ENCODE measurements at regions of chr11 and their contacts with region 1.

Region 1: DNA sequence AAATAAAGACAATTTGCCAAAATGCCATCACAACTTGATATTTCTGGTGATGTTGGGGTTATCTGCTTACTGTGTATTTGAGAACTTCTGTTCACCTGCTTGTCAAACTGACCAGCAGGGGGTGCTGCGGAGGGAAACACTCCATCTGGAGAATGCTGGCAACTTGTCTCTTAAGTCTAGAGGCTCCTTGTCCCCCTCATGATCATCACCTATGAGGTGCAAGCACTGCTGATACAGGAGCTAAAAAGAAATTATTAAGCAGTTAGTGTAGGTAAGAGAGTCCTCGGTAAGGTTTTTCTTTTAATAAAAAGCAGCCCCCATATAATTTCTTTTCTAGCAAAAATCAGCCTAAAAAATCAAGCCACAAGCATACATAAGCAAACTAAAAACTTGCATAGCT is 32.7 kb upstream of the GLYATL1B start:
- DNase-seq: no peak
- ATAC-seq: peak; percentile 84
- H3K4me3 ChIP-seq: no peak overlapping the region
- H3K27ac ChIP-seq: no peak overlapping the region
- H3K4me1 ChIP-seq: peaks cover 4% of the 10 kb centered on the region; the same call in 1 of the 2 replicates
- H3K27me3 ChIP-seq: no peaks in the 10 kb centered on the region
- CTCF ChIP-seq: peak; percentile 47 to 75 (median 63)
- EP300 ChIP-seq: no peak
- POLR2A ChIP-seq: no peak
- RAD21 ChIP-seq: peak; percentile 44; the same call in 1 of the 2 replicates

Region 2: DNA sequence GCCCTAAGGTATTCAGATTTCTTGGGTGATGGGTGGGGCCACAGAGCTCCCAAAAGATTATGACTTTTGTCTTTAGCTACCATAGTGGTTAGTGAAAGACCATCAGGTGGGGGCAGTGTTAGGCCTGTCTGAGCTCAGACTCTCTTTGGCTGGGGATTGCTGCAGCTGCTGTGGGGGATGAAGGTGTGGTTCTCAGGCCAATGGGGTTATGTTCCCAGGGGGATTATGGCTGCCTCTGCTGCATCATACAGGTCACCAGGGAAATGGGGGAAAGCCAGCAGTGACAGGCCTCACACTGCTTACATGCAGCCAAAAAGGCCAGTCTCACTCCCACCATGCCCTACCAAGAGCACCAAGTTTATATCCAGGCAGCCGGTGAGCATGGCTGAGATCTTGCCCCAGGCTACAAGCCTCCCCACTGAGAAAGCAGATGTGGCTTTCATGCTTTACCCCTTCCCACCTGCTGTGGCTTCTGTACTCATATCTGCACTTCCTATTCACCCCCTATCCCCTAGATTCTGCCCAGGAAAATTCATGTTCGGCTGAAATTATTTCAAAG is 406.2 kb before region 1 on chr11:
- CTCF ChIA-PET with region 1: interaction called, 14 read pairs
- POLR2A ChIA-PET with region 1: no interaction called
- RAD21 ChIA-PET with region 1: interaction called, 13 read pairs
- SMC1A ChIA-PET with region 1: interaction called, 3 read pairs
- in situ Hi-C with region 1: no loop called
- intact Hi-C with region 1: loop called (anchors 5 kb)
- DNase-seq: peak; percentile 48
- ATAC-seq: peak; percentile 93
- H3K4me3 ChIP-seq: no peak overlapping the region
- H3K27ac ChIP-seq: peak overlapping the region; percentile 40; the same call in 1 of the 2 replicates
- H3K4me1 ChIP-seq: peaks cover 10% of the 10 kb centered on the region
- H3K27me3 ChIP-seq: no peaks in the 10 kb centered on the region
- CTCF ChIP-seq: peak in 2 of 3 experiments; percentile 21 to 40; a peak in 3 of 6 replicates
- EP300 ChIP-seq: peak; percentile 66 to 72; a peak in 2 of 4 replicates
- POLR2A ChIP-seq: no peak
- RAD21 ChIP-seq: peak; percentile 57; the same call in 1 of the 2 replicates

Region 3: DNA sequence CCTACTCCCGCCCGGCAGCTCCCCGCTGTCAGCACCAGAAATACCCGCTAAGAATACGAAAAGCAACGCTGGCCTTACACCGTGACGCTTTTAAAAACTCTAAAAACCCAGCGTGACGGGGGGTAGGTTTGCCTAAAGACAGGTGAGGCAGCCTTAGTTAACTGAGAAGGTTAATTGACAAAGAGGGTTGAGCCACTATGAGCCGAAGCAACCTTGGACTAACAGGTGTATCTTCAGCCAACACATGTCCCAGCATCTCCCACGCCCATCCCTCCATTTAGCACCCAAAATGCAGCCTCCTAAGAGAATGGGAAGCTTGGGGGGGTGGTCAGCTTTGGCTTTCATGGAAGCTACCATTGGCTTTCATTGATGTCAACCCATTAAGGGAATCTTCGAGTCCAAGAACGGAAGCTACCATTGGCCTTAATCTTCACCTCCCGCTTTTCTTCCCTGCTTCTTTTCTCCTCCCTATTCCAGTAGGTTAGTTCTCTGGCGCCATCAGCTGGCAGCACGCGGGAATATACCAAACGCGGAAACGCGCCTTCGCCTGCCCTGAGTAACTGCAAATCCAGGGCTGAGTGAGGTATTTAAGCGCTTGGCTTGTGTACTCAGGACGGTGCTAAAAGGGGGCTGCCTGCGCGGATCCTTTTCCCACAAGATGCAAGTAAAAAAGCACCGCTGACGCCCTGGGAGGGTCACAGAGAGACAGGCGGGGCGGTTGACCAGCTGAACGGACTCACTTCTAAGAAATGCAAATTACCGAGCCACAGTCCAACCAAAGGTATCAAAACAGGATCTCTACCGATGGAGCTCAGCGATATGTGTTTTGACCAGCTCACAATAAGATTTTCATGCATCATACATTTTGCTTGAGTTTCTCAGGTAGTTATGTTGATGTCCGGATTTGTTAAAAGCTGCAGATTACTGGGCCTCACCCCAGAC is 152.6 kb before region 1 on chr11:
- CTCF ChIA-PET with region 1: interaction called, 14 read pairs
- POLR2A ChIA-PET with region 1: no interaction called
- RAD21 ChIA-PET with region 1: interaction called, 7 read pairs
- SMC1A ChIA-PET with region 1: no interaction called
- in situ Hi-C with region 1: no loop called
- intact Hi-C with region 1: no loop called
- DNase-seq: peak; percentile 16
- ATAC-seq: peak; percentile 90
- H3K4me3 ChIP-seq: no peak overlapping the region
- H3K27ac ChIP-seq: no peak overlapping the region
- H3K4me1 ChIP-seq: no peaks in the 10 kb centered on the region
- H3K27me3 ChIP-seq: peaks cover 1 to 7% of the 10 kb centered on the region in 2 experiments
- CTCF ChIP-seq: peak; percentile 51 to 66 (median 62); a peak in 5 of 6 replicates
- EP300 ChIP-seq: no peak
- POLR2A ChIP-seq: no peak
- RAD21 ChIP-seq: peak; percentile 52; the same call in 1 of the 2 replicates

Region 4: GRCh38 chr11:59069087-59069486 is 15.7 kb after region 1 on chr11:
- CTCF ChIA-PET with region 1: interaction called, 17 read pairs
- POLR2A ChIA-PET with region 1: no interaction called
- RAD21 ChIA-PET with region 1: interaction called, 5 read pairs
- SMC1A ChIA-PET with region 1: interaction called, 7 read pairs
- in situ Hi-C with region 1: no loop called
- intact Hi-C with region 1: no loop called
- DNase-seq: no peak
- ATAC-seq: no peak
- H3K4me3 ChIP-seq: no peak overlapping the region
- H3K27ac ChIP-seq: no peak overlapping the region
- H3K4me1 ChIP-seq: peaks cover under 1% of the 10 kb centered on the region; the same call in 1 of the 2 replicates
- H3K27me3 ChIP-seq: no peaks in the 10 kb centered on the region
- CTCF ChIP-seq: no peak
- EP300 ChIP-seq: no peak
- POLR2A ChIP-seq: no peak
- RAD21 ChIP-seq: no peak

Region 5: DNA sequence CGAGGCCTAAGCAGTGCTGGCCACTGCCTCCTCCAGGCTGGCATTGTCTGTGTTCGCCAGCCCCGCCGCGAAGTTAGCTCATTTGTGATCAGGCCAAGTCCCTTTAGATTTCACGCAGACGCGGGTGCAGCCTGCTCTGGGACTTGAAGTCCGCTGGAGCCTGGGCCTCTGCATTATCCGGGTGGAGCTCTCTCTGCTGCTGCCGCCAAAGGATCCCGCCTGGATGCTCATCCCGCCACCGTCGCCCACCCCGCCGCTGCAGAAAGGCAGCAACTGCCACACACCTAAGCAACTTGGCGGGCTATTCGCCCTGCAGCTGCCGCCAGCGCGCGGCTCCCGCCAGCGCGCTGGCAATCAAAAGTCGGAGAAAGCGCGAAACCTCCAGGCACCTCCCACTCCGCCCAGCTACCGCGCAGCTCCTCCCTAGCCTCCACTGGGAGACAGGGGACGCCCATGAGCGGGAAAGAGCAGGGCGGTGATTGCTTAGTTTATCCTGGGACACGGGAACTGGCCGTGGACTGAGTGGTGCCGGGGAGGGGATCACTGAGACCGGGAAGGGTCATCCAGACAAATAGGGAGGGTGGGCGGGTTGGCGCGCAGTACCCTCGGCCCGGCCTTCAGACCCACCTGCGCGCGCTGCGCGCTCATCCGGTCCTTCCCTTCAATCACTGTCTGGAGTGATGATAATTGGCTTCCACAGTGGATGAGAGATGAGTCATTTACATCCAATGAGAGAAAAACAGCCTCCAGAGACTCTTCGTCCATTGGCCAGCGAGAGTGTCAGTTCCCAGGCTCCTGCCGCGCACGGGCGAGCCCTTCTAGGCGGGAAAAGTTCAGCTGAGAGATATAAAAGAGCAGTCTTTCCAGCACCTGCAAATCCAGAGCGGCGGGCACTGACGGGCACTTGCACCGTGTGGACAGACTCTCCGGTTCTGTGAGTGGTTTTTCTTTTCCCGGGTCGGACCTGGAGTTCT is 53.3 kb after region 1 on chr11 and contains the start of gene FAM111B:
- CTCF ChIA-PET with region 1: interaction called, 48 read pairs
- POLR2A ChIA-PET with region 1: no interaction called
- RAD21 ChIA-PET with region 1: interaction called, 7 read pairs
- SMC1A ChIA-PET with region 1: interaction called, 6 read pairs
- in situ Hi-C with region 1: no loop called
- intact Hi-C with region 1: no loop called
- DNase-seq: peak; percentile 84
- ATAC-seq: peak; percentile 85
- H3K4me3 ChIP-seq: peak within 1 kb of the TSS; percentile 79
- H3K27ac ChIP-seq: peak within 1 kb of the TSS; percentile 89
- H3K4me1 ChIP-seq: peaks cover 7% of the 10 kb centered on the region
- H3K27me3 ChIP-seq: no peaks in the 10 kb centered on the region
- CTCF ChIP-seq: no peak
- EP300 ChIP-seq: no peak
- POLR2A ChIP-seq: peak; percentile 79
- RAD21 ChIP-seq: no peak
- polyA plus RNA-seq, gene FAM111B: 42.0 to 65.3 TPM

Region 6: GRCh38 chr11:59142530-59143507 is 89.4 kb after region 1 on chr11 and contains the start of gene FAM111A:
- CTCF ChIA-PET with region 1: interaction called, 30 read pairs
- POLR2A ChIA-PET with region 1: no interaction called
- RAD21 ChIA-PET with region 1: interaction called, 6 read pairs
- SMC1A ChIA-PET with region 1: interaction called, 5 read pairs
- in situ Hi-C with region 1: loop called (anchors 5 kb)
- intact Hi-C with region 1: no loop called
- DNase-seq: peak; percentile 69
- ATAC-seq: peak; percentile 85
- H3K4me3 ChIP-seq: peak within 1 kb of the TSS; percentile 83
- H3K27ac ChIP-seq: peak within 1 kb of the TSS; percentile 91
- H3K4me1 ChIP-seq: peaks cover 21% of the 10 kb centered on the region; the same call in 1 of the 2 replicates
- H3K27me3 ChIP-seq: no peaks in the 10 kb centered on the region
- CTCF ChIP-seq: peak; percentile 39 to 54 (median 39)
- EP300 ChIP-seq: no peak
- POLR2A ChIP-seq: peak; percentile 73; the same call in 1 of the 2 replicates
- RAD21 ChIP-seq: peak; percentile 44; the same call in 1 of the 2 replicates
- polyA plus RNA-seq, gene FAM111A: 26.6 to 41.6 TPM

Region 7: DNA sequence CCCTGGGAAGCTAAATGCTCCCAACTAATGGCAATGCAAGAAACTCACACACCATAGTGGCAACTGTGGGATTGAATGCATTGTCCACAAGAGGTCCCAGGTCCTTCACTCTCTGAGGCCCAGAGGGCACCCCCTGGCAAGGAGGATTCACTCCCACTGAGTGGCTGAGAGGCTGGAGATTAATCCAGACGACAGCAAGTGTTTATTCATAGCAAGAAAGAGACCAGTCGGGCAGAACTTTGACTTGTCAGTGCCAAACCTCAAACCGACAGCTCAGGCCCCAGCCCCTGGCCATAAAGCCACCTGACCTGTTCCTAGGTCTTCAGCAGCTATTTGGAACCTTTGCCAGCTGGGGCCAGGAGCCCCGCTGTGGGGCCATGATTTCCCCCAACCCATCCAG is 213.8 kb after region 1 on chr11:
- CTCF ChIA-PET with region 1: no interaction called
- POLR2A ChIA-PET with region 1: no interaction called
- RAD21 ChIA-PET with region 1: no interaction called
- SMC1A ChIA-PET with region 1: no interaction called
- in situ Hi-C with region 1: no loop called
- intact Hi-C with region 1: no loop called
- DNase-seq: peak; percentile 59
- ATAC-seq: peak; percentile 86
- H3K4me3 ChIP-seq: no peak overlapping the region
- H3K27ac ChIP-seq: no peak overlapping the region
- H3K4me1 ChIP-seq: peaks cover 27% of the 10 kb centered on the region
- H3K27me3 ChIP-seq: no peaks in the 10 kb centered on the region
- CTCF ChIP-seq: peak in 1 of 3 experiments; percentile 8; a peak in 1 of 6 replicates
- EP300 ChIP-seq: peak; percentile 9 to 59; a peak in 2 of 4 replicates
- POLR2A ChIP-seq: no peak
- RAD21 ChIP-seq: peak; percentile 31; the same call in 1 of the 2 replicates

Measured in GM12878 (cell line).